ENCODE measurements at regions of chr7 and their contacts with region 1.

Region 1: GRCh38 chr7:149873074-149873969 is at the start of gene ATP6V0E2:
- DNase-seq: peak; percentile 95 to 96
- H3K4me3 ChIP-seq: peak within 1 kb of the TSS; percentile 82
- H3K27ac ChIP-seq: peak within 1 kb of the TSS; percentile 83 to 89
- H3K4me1 ChIP-seq: peaks cover 0 to 15% (median 12%) of the 10 kb centered on the region in 4 donors
- H3K27me3 ChIP-seq: no peaks in the 10 kb centered on the region
- CTCF ChIP-seq: no peak

Region 2: DNA sequence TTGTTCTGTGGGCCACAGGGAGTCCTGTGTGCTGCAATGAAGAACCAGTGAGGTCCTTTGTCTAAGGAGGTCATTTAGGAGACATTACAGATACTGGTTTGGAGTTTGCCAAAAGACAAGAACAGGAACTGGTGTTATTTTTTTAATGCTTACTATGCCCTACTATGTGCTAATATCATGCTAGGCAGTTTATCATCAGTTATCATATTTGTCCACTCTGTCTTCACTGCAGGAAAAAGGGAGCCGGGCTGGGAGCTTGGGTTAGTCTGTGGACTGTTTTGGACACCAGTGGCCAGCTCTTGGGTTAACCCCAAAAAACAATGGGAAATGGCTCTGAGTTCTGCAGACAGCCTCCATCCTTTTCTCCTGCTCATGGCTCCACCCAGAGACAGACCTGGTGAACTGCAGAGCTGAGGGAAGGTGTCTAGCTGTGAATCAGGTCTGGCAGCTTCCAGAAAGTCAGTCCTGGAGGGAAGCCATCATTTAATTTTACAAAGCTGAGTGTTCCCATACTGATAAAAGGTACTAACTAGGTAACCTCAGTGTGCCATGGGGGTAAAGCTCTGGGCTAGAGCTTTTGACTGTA is 274.5 kb before region 1 on chr7:
- intact Hi-C with region 1: no loop called
- DNase-seq: no peak
- H3K4me3 ChIP-seq: no peak overlapping the region
- H3K27ac ChIP-seq: no peak overlapping the region
- H3K4me1 ChIP-seq: no peaks in the 10 kb centered on the region
- H3K27me3 ChIP-seq: no peaks in the 10 kb centered on the region
- CTCF ChIP-seq: no peak

Region 3: GRCh38 chr7:149776289-149776688 is 97.0 kb before region 1 on chr7:
- intact Hi-C with region 1: no loop called
- DNase-seq: peak in 1 of 2 donors; percentile 67
- H3K4me3 ChIP-seq: no peak overlapping the region
- H3K27ac ChIP-seq: no peak overlapping the region
- H3K4me1 ChIP-seq: peaks cover 0 to 21% (median 15%) of the 10 kb centered on the region in 4 donors
- H3K27me3 ChIP-seq: no peaks in the 10 kb centered on the region
- CTCF ChIP-seq: no peak

Region 4: DNA sequence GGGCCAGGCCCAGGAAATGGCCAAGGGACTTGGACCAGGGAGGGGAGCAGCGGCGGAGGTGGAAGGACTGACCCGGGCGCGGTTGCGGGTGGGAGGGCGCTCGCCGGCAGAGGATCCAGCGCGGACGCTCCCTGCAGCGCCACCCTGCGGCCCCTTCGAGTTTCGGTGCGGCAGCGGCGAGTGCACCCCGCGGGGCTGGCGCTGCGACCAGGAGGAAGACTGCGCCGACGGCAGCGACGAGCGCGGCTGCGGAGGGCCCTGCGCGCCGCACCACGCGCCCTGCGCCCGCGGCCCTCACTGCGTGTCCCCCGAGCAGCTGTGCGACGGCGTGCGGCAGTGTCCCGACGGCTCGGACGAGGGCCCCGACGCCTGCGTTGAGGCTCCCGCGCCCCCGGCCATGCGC is 83.2 kb before region 1 on chr7:
- intact Hi-C with region 1: no loop called
- DNase-seq: no peak
- H3K4me3 ChIP-seq: no peak overlapping the region
- H3K27ac ChIP-seq: no peak overlapping the region
- H3K4me1 ChIP-seq: peaks cover 0 to 4% (median 0%) of the 10 kb centered on the region in 4 donors
- H3K27me3 ChIP-seq: peaks cover 0 to 59% of the 10 kb centered on the region in 2 donors
- CTCF ChIP-seq: peak in 1 of 2 experiments; percentile 18

Region 5: DNA sequence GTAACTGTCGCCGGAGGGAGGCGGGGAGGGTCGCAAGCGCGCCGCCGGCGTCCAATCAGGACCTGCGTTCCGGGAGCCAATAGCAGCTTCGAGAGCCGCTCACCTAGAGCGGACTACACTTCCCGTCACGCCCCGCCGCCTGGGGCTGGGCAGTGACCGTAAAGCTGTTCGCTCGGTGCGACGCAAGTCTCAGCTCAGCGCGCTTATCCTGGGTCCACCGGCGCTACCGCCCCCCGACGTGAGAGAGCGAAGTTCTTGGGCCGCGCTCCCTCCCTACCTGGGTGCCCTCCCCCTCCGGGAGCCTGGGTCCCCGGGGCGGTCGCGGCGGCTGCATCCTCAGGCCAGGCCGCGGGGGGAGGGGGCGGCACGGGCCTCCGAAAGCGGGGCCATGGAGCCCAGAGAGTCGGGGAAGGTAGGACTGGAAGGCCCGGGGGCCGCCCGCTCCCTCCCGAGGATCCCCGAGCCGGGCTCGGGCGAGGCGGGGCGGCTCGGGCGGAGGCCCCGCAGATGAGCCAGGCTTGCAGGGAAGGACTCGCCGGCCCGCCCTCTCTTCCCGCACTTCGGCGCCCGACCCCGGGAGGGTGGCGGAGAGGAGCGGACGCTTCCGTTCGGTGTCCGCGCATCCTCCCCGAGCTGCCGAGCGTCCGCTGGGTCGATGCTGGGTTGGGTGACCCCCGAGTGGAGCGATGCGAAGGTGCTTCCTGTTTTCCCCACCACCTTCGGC is 34.9 kb before region 1 on chr7 and contains the start of gene ZNF862:
- intact Hi-C with region 1: loop called (anchors 5 kb)
- DNase-seq: peak; percentile 98 to 99
- H3K4me3 ChIP-seq: peak within 1 kb of the TSS; percentile 83 to 91
- H3K27ac ChIP-seq: peak within 1 kb of the TSS; percentile 83 to 91
- H3K4me1 ChIP-seq: peaks cover 0 to 14% (median 11%) of the 10 kb centered on the region in 4 donors
- H3K27me3 ChIP-seq: no peaks in the 10 kb centered on the region
- CTCF ChIP-seq: no peak